Prostate gland (tissue), 2 donors: ENCODE measurements at regions of chr3 and their contacts with region 1.

Region 1: GRCh38 chr3:99765042-99765942 is 52.4 kb upstream of the CMSS1 start:
- DNase-seq: no peak
- H3K4me3 ChIP-seq: no peak overlapping the region
- H3K27ac ChIP-seq: no peak overlapping the region
- H3K4me1 ChIP-seq: no peaks in the 10 kb centered on the region
- H3K27me3 ChIP-seq: no peaks in the 10 kb centered on the region
- CTCF ChIP-seq: no peak
- POLR2A ChIP-seq: no peak

Region 2: DNA sequence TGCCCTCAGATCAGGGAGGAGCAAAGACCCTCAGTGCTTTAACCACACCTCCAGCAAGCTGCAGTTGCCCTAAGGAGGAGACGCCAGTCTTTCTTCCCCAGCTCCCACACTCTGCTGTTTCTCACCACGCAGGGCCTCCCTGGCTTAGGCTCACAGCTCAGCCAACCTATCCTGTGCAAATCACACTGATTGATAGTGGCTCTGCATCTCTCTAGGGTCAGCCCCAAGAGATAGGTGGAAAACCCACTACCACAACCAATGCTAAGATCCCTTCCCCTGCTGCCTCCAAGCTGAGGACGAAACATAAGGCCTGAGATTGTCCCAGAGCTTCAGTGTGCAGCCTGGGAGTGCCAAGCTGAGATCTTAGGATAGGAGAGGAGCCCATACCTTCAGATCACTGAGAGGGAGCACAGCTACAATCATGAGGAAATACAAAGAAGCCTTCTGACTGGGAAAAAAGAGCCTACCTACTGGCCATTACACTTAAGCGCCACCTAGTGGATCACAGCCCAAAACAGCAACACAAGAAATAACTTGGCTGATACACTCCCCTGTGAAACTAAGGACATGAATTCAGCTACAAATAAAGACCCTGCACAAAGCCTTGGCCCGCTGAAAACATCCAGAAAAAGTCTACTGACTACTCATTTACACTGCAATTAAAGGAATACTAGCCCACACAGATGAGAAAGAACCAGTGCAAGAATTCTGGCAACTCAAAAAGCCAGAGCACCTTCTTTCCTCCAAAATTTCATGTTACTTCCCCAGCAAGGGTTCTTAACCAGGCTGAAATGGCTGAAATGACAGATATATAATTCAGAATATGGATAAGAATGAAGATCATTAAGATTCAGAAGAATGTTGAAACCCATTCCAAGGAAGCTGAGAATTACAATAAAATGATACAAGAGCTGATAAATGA is 592.3 kb before region 1 on chr3:
- intact Hi-C with region 1: loop called (anchors 10 kb)
- DNase-seq: peak; percentile 27
- H3K4me3 ChIP-seq: no peak overlapping the region
- H3K27ac ChIP-seq: no peak overlapping the region
- H3K4me1 ChIP-seq: no peaks in the 10 kb centered on the region
- H3K27me3 ChIP-seq: no peaks in the 10 kb centered on the region
- CTCF ChIP-seq: peak; percentile 22 to 53 (median 46)
- POLR2A ChIP-seq: no peak

Region 3: DNA sequence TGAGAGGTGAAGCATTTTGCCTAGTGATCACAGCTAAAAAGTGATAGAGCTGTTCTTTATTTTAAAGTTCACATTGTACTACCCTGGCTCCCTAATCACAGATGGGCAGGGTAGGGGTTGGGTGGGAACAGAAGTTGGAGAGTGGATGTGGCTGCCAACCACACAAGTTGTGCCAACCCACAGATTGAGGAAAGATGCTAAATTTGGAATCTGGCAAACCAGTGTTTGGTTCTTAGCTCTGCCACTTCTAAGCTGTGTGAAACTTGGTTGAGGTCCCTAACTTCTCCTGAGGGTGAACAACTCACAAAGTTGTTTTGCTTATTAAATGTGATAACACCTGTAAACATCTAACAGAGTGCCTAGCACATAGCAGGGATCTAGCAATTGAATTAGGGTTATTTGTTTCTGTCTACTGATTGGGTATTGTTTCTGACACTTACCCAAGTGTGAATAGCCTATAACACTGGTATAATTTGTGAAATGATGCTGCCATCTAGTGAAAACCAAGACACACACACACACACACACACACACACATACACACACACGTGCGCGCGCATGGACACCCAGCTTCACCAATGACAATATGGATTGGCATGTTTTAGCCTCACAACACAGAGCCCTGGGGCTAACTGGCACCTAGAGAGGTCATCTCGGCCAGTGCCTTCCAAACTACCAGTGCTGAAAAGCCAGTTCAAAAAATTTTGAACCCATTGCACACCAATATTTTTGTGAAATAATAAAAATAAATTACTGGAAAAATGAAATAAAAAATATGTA is 869.4 kb after region 1 on chr3:
- intact Hi-C with region 1: no loop called
- DNase-seq: no peak
- H3K4me3 ChIP-seq: no peak overlapping the region
- H3K27ac ChIP-seq: no peak overlapping the region
- H3K4me1 ChIP-seq: no peaks in the 10 kb centered on the region
- H3K27me3 ChIP-seq: no peaks in the 10 kb centered on the region
- CTCF ChIP-seq: peak in 1 of 4 experiments; percentile 26
- POLR2A ChIP-seq: no peak